ENCODE measurements at regions of chr20 and their contacts with region 1.

Region 1: GRCh38 chr20:22763257-22763906 is 179.0 kb upstream of the FOXA2 start:
- DNase-seq: peak; percentile 67 to 81
- ATAC-seq: peak; percentile 71
- H3K4me3 ChIP-seq: no peak overlapping the region
- H3K27ac ChIP-seq: peak overlapping the region; percentile 50 to 95
- H3K4me1 ChIP-seq: peaks cover 0 to 4% of the 10 kb centered on the region in 2 donors
- H3K27me3 ChIP-seq: no peaks in the 10 kb centered on the region

Region 2: DNA sequence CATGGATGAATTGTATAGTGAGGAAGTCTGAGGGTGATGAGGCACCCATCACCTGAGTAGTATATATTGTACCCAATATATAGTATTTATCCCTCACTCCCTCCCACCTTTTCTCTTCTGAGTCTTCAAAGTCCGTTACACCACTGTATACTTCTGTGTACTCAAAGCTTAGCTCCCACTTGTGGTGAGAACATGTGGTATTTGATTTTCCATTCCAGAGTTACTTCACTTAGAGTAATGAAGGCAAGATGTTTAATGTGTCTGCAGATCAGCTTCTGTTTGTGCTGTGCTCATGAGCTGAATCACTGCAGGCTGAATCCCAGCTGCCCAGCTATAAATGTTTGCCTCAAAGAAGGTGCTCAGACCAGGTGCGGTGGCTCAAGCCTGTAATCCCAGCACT is 39.7 kb before region 1 on chr20:
- intact Hi-C with region 1: no loop called
- DNase-seq: no peak
- ATAC-seq: no peak
- H3K4me3 ChIP-seq: no peak overlapping the region
- H3K27ac ChIP-seq: no peak overlapping the region
- H3K4me1 ChIP-seq: no peaks in the 10 kb centered on the region
- H3K27me3 ChIP-seq: no peaks in the 10 kb centered on the region

Region 3: DNA sequence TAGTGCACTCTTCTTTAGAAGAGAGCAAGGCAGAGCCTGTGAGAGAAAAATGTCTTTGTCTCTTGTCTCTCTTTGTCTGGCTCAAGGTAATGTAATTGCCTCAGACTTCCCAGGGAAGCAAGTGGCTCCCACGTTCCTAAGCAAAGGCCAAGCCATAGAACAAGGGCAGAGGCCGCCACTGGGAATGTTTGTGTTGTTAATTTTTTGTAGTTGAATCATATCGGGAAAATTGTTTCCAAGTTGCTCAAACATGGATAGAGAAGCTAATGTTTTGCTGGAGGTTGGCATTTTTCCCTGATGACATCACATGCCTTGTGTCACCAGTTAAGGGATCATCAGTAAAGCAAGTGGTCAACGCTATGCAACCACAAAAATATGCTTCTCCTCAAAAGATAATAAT is 32.5 kb after region 1 on chr20:
- intact Hi-C with region 1: loop called in 1 of 2 experiments (anchors 5 kb)
- DNase-seq: peak; percentile 66 to 81
- ATAC-seq: peak; percentile 88
- H3K4me3 ChIP-seq: no peak overlapping the region
- H3K27ac ChIP-seq: peak overlapping the region; percentile 18 to 94
- H3K4me1 ChIP-seq: peaks cover 0 to 4% of the 10 kb centered on the region in 2 donors
- H3K27me3 ChIP-seq: no peaks in the 10 kb centered on the region

Region 4: DNA sequence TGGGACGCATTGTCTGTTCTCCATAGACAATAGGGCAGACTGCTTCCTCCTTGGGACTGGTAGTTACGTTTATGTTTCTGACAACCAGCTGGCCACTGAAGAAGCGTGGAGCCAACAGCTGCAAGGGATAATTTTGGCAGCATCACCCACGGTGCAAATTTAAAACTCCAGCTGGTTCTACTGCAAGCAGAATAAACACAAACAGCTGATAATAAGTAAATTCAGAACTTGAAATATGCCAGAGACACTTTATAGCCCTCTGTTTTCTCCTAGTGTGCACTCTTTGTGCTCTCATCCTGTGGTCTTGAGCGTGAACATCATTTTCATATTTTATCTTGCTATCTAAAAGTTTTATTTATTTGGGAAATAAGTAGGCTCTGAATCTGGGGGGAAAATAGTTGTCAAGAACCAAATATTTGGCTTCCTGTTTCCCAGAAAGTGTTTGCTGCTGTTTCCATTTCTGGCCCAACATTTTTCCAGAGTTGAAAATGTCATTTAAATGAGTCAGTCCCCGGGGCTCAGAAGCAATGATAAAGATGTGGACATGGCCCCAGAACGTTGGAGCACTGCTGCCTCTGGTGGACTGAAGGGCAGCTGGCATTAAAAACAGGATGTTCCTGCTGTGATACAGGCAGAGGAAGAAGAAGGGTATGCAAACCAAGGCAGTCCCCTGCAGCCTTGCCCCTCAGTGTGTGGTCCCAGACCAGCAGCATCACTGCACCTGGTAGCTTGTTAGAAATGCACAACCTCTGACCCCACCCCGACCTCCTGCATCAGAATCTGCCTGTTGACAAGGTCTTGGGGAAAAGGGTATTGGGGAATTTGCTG is 298.6 kb after region 1 on chr20:
- intact Hi-C with region 1: loop called in 1 of 2 experiments (anchors 5 kb)
- DNase-seq: peak; percentile 75 to 81
- ATAC-seq: peak; percentile 87
- H3K4me3 ChIP-seq: no peak overlapping the region
- H3K27ac ChIP-seq: peak overlapping the region; percentile 91 to 99
- H3K4me1 ChIP-seq: peaks cover 10 to 14% of the 10 kb centered on the region in 2 donors
- H3K27me3 ChIP-seq: no peaks in the 10 kb centered on the region